Sigmoid colon (tissue), 7 donors: ENCODE measurements at regions of chr7 and their contacts with region 1.

Region 1: GRCh38 chr7:774161-775109 is 47.4 kb upstream of the PRKAR1B start:
- DNase-seq: no peak
- H3K4me3 ChIP-seq: no peak overlapping the region
- H3K27ac ChIP-seq: no peak overlapping the region
- H3K4me1 ChIP-seq: peaks cover 4 to 40% (median 38%) of the 10 kb centered on the region in 4 donors
- H3K27me3 ChIP-seq: no peaks in the 10 kb centered on the region
- CTCF ChIP-seq: peak; percentile 87 to 98 (median 91)
- EP300 ChIP-seq: no peak
- POLR2A ChIP-seq: no peak

Region 2: DNA sequence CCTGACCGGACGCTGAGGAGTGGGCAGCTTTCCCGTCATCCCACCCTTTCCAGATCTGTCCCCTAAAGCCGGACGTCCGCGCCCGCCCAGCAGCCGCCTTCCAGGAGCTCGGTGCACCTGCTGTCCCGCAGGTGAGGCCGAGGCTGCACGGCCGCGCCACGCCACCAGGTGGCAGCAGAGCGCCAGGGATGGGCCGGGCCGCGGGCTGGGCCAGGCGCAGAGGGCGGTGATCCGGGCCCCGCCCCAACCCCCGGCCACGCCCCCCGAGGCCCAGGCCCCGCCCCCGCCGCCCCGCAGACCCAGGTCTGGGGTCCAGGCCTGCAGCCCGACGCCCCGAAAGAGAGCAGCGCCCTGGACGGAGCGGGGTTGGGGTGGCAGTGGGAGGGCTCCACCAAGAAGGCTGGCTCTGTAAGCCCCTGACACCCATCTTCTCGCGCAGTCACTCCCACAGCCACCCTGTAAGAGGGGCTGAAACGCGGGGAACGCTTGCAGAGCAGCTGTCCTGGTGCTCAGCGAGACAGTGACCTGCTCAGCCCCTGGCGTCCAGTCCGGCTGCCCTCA is 452.2 kb before region 1 on chr7:
- intact Hi-C with region 1: loop called (anchors 1 kb)
- DNase-seq: no peak
- H3K4me3 ChIP-seq: peak overlapping the region in 2 of 4 donors; percentile 7 to 24
- H3K27ac ChIP-seq: peak overlapping the region in 3 of 4 donors; percentile 4 to 51 (median 6)
- H3K4me1 ChIP-seq: peaks cover 0 to 9% (median 7%) of the 10 kb centered on the region in 4 donors
- H3K27me3 ChIP-seq: peaks cover 0 to 4% (median 3%) of the 10 kb centered on the region in 3 donors
- CTCF ChIP-seq: peak; percentile 77 to 98 (median 84)
- EP300 ChIP-seq: no peak
- POLR2A ChIP-seq: no peak

Region 3: DNA sequence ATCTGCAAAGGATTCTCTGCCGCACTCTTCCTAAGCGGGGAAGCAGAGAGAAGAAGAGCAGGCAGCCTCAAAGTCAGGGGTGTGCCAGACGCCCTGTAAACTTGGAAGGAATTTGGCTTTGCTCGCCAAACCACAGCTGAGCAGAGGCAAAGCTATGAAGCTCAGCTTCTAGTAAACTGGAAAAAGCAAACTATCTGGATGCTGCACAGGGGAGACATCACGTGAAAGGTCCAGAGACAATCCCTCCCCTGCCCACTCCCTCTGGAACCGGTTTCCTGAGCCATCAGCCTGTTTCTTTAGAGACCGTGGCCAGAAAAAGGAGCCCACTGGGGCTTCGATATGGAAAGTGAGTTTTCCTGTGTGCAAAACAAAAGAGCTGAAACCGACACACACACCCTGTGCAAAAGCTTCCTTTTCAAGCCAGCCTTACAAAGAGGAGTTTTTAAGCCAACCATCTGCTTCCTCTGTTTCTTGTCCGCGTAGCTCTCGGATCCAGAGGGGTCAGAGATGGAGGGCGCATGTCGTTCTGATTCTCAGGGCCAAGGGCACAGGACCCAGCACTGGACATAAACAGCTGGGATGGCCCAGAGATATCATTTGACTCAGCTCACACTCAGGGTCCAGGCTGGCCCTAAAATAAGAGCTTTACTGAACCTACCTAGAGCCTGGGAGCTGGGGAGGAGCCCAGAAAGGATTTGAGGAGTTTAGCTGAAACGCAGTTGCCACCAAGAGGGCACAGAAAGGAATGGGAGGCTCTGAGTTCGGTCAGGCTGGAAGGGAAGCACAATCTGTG is 106.1 kb before region 1 on chr7:
- intact Hi-C with region 1: loop called (anchors 1 kb)
- DNase-seq: peak; percentile 89
- H3K4me3 ChIP-seq: peak overlapping the region in 3 of 4 donors; percentile 16 to 28 (median 24)
- H3K27ac ChIP-seq: peak overlapping the region; percentile 78 to 93 (median 82)
- H3K4me1 ChIP-seq: peaks cover 0 to 55% (median 52%) of the 10 kb centered on the region in 4 donors
- H3K27me3 ChIP-seq: no peaks in the 10 kb centered on the region
- CTCF ChIP-seq: no peak
- EP300 ChIP-seq: peak in 1 of 4 donors; percentile 90
- POLR2A ChIP-seq: no peak

Region 4: GRCh38 chr7:732094-732541 is 42.3 kb before region 1 on chr7:
- intact Hi-C with region 1: loop called (anchors 2 kb)
- DNase-seq: peak; percentile 79
- H3K4me3 ChIP-seq: no peak overlapping the region
- H3K27ac ChIP-seq: peak overlapping the region in 3 of 4 donors; percentile 8 to 31 (median 19)
- H3K4me1 ChIP-seq: peaks cover 0 to 20% (median 14%) of the 10 kb centered on the region in 4 donors
- H3K27me3 ChIP-seq: no peaks in the 10 kb centered on the region
- CTCF ChIP-seq: peak in 3 of 4 experiments; percentile 19 to 43 (median 37)
- EP300 ChIP-seq: no peak
- POLR2A ChIP-seq: no peak

Region 5: GRCh38 chr7:954330-955238 is 180.1 kb after region 1 on chr7 and contains the start of gene ADAP1:
- intact Hi-C with region 1: no loop called
- DNase-seq: peak; percentile 67
- H3K4me3 ChIP-seq: peak within 1 kb of the TSS; percentile 43 to 78 (median 70)
- H3K27ac ChIP-seq: peak within 1 kb of the TSS; percentile 80 to 93 (median 89)
- H3K4me1 ChIP-seq: peaks cover 0 to 36% (median 25%) of the 10 kb centered on the region in 4 donors
- H3K27me3 ChIP-seq: no peaks in the 10 kb centered on the region
- CTCF ChIP-seq: no peak
- EP300 ChIP-seq: no peak
- POLR2A ChIP-seq: no peak
- total RNA-seq, gene ADAP1: 11.4 to 72.6 (median 28.9) TPM

Region 6: GRCh38 chr7:1368682-1369571 is 594.5 kb after region 1 on chr7:
- intact Hi-C with region 1: no loop called
- DNase-seq: no peak
- H3K4me3 ChIP-seq: no peak overlapping the region
- H3K27ac ChIP-seq: no peak overlapping the region
- H3K4me1 ChIP-seq: peaks cover 0 to 10% (median 9%) of the 10 kb centered on the region in 4 donors
- H3K27me3 ChIP-seq: peaks cover 38 to 98% (median 83%) of the 10 kb centered on the region in 3 donors
- CTCF ChIP-seq: no peak
- EP300 ChIP-seq: no peak
- POLR2A ChIP-seq: no peak